ENCODE measurements at regions of chr13 and their contacts with region 1.

Region 1: DNA sequence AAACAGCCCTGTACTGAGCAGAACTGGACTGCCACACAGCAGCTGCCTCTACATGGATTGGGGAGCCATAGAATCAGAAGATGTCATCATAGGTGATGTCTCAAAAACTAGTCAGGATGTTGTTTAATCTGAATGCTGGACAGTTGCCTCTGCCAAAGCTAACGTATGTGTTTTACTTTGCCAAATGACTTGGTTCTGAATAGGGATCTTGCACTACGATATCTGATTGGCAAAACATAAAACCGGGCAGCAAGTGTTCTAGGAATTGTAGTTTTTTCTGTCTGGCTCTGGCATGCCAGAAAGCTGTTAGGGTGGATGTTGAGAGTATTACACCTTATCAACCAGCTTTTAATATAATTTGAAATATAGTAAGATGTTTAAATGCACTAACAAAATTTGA is 645.9 kb downstream of the GPC5 start:
- DNase-seq: no peak
- H3K4me3 ChIP-seq: no peak overlapping the region
- H3K27ac ChIP-seq: no peak overlapping the region
- H3K4me1 ChIP-seq: no peaks in the 10 kb centered on the region
- CTCF ChIP-seq: no peak

Region 2: DNA sequence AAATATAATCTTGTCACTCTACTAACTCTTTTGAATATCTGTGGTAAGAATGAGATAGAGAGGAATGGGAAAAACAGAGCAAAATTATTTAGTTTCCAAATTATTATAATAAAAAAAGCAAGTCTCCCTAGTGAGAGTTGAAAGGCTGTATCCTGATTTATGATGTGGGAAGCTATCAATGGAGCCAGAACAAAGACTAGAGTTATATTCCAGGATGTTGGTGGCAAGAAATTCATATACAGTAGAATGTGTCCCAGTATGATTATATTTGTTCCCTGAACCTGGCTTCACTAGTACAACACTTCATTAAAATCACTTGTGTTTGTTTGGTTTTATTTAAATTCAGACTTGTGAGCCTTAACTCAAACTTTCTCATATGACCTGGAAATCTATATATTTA is 15.7 kb before region 1 on chr13:
- CTCF ChIA-PET with region 1: no interaction called
- POLR2A ChIA-PET with region 1: interaction called, 14 read pairs
- intact Hi-C with region 1: no loop called
- DNase-seq: no peak
- H3K4me3 ChIP-seq: no peak overlapping the region
- H3K27ac ChIP-seq: no peak overlapping the region
- H3K4me1 ChIP-seq: no peaks in the 10 kb centered on the region
- CTCF ChIP-seq: no peak

Measured in OCI-LY7 (cell line).